ENCODE measurements at regions of chr7 and their contacts with region 1.

Region 1: GRCh38 chr7:151876899-151877777 is at the start of gene PRKAG2:
- DNase-seq: peak; percentile 53 to 84 (median 70)
- ATAC-seq: peak; percentile 54
- H3K4me3 ChIP-seq: peak within 1 kb of the TSS; percentile 91
- H3K4me3 Mint-ChIP-seq: peak within 1 kb of the TSS; percentile 99
- H3K27ac ChIP-seq: peak within 1 kb of the TSS; percentile 45 to 64
- H3K27ac Mint-ChIP-seq: peak within 1 kb of the TSS; percentile 93
- H3K4me1 ChIP-seq: peaks cover 24% of the 10 kb centered on the region
- H3K4me1 Mint-ChIP-seq: peaks cover 30% of the 10 kb centered on the region
- H3K27me3 ChIP-seq: no peaks in the 10 kb centered on the region
- H3K27me3 Mint-ChIP-seq: no peaks in the 10 kb centered on the region
- CTCF ChIP-seq: peak; percentile 21
- total RNA-seq, gene PRKAG2: 39.3 to 42.3 TPM

Region 2: DNA sequence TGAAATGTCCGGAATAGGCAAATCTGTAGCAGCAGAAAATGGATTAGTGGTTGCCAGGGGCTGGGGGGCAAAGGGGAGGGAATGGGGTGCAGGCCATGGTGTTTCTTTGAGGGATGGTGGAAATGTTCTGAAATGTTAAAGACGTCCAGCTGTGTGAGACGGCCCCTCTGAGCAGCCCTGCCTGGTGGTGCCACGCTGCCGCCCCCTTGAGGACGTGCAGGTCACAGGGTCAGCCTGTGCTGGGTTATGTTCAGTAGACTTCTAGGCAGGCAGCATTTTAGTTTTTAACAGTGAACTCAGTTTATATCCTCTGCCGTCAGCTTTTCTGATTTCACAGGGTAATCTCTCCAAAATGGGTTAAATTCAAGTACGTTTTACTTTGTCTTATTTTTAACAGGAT is 526.1 kb before region 1 on chr7:
- CTCF ChIA-PET with region 1: no interaction called
- POLR2A ChIA-PET with region 1: no interaction called
- intact Hi-C with region 1: loop called in 1 of 2 experiments (anchors 10 kb)
- DNase-seq: peak in 7 of 14 experiments; percentile 12 to 62 (median 37)
- ATAC-seq: no peak
- H3K4me3 ChIP-seq: no peak overlapping the region
- H3K4me3 Mint-ChIP-seq: peak overlapping the region; percentile 70
- H3K27ac ChIP-seq: peak overlapping the region; percentile 60 to 93
- H3K27ac Mint-ChIP-seq: peak overlapping the region; percentile 94
- H3K4me1 ChIP-seq: peaks cover 51% of the 10 kb centered on the region
- H3K4me1 Mint-ChIP-seq: peaks cover 59% of the 10 kb centered on the region
- H3K27me3 ChIP-seq: no peaks in the 10 kb centered on the region
- H3K27me3 Mint-ChIP-seq: no peaks in the 10 kb centered on the region
- CTCF ChIP-seq: no peak

Region 3: DNA sequence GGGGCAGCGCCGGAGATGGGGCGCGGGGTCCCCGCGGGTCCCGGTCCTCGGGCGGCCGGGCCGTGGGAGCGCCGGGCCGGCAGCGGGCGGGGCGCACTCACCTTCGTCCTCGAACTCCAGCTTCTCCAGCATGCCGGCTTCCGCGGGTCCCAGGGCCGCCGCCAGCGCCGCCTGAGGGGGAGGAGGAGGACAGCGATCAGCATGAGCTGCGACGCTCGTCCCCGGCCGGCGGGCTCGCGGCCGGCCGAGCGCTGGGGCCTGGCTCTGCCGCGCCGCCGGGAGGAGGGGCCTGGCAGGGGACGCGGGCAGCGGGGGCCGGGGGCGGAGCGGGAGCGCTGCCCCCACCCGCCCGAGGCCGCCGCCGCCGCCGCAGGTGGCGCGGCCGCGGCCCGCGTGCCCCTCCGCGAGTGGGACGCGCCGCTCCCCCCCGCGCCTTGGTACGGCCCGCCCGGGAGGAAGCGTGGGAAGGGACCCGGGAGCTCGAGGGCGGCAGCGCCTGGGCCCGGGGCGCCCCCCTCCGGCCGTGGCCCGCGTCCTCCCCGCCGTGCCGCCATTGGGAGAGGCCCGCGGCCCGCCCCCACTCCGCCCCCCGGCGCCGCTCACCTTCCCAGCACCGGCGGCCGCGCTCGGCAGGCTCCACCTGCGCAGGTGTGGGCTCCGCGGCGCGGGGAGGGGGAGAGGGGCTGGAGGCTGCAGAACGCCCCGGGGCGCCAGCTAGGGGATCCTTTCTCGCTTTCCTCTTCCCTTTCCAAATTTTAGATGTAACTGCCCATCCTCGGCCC is 245.0 kb before region 1 on chr7:
- CTCF ChIA-PET with region 1: interaction called, 5 read pairs
- POLR2A ChIA-PET with region 1: interaction called, 19 read pairs
- intact Hi-C with region 1: loop called in 1 of 2 experiments (anchors 2 kb)
- DNase-seq: peak; percentile 76 to 96 (median 89)
- ATAC-seq: peak; percentile 83
- H3K4me3 ChIP-seq: peak overlapping the region; percentile 68
- H3K4me3 Mint-ChIP-seq: peak overlapping the region; percentile 95
- H3K27ac ChIP-seq: peak overlapping the region; percentile 75 to 82
- H3K27ac Mint-ChIP-seq: peak overlapping the region; percentile 99
- H3K4me1 ChIP-seq: peaks cover 15% of the 10 kb centered on the region
- H3K4me1 Mint-ChIP-seq: peaks cover 45% of the 10 kb centered on the region
- H3K27me3 ChIP-seq: no peaks in the 10 kb centered on the region
- H3K27me3 Mint-ChIP-seq: no peaks in the 10 kb centered on the region
- CTCF ChIP-seq: no peak

Region 4: DNA sequence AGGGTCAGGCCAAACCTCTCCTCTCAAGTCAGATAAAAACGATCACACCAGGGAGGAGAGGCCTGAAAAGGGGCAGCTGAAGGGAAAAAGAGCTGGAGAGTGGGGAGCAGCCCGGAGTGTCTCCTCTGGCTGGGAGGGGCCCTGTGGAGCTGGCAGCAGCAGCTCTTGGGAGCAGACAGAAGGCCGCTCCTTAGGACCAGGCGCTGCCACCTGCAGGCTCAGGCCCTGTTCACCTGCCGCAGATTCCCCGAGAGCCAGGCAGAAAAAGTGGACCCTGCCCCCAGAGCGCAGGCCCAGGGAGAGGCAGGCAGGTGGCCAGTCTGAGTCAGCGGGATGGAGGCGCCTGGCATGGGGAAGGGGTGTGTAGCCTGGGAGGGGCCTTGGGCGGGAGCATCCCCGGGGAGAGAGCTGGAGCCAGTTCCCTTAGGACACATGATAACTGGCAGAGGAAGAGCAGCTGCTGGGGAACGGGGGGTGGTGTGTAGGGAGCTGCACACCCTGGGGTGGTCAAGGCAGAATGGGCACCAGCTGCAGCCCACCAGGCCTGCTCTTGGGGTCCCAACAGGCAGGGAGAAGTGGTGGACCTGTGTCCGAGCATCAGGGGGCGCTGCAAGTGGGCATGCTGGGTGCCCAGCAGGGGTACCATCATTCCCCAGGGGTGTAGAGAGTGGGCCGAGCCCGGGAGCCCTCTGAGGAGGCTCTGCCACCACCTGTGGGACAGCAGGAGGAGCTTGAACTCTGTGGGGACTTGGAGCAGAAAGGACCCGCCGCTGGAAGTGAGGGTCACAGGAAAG is 180.2 kb before region 1 on chr7:
- CTCF ChIA-PET with region 1: no interaction called
- POLR2A ChIA-PET with region 1: no interaction called
- intact Hi-C with region 1: no loop called
- DNase-seq: no peak
- ATAC-seq: no peak
- H3K4me3 ChIP-seq: no peak overlapping the region
- H3K4me3 Mint-ChIP-seq: no peak overlapping the region
- H3K27ac ChIP-seq: no peak overlapping the region
- H3K27ac Mint-ChIP-seq: no peak overlapping the region
- H3K4me1 ChIP-seq: no peaks in the 10 kb centered on the region
- H3K4me1 Mint-ChIP-seq: peaks cover 5% of the 10 kb centered on the region
- H3K27me3 ChIP-seq: no peaks in the 10 kb centered on the region
- H3K27me3 Mint-ChIP-seq: no peaks in the 10 kb centered on the region
- CTCF ChIP-seq: no peak

Region 5: GRCh38 chr7:151838861-151839391 is 38.2 kb before region 1 on chr7:
- CTCF ChIA-PET with region 1: no interaction called
- POLR2A ChIA-PET with region 1: interaction called, 13 read pairs
- intact Hi-C with region 1: no loop called
- DNase-seq: peak in 9 of 14 experiments; percentile 16 to 73 (median 34)
- ATAC-seq: peak; percentile 73
- H3K4me3 ChIP-seq: peak overlapping the region; percentile 37
- H3K4me3 Mint-ChIP-seq: peak overlapping the region; percentile 65
- H3K27ac ChIP-seq: peak overlapping the region; percentile 0 to 41
- H3K27ac Mint-ChIP-seq: peak overlapping the region; percentile 74
- H3K4me1 ChIP-seq: peaks cover 44% of the 10 kb centered on the region
- H3K4me1 Mint-ChIP-seq: peaks cover 31% of the 10 kb centered on the region
- H3K27me3 ChIP-seq: no peaks in the 10 kb centered on the region
- H3K27me3 Mint-ChIP-seq: no peaks in the 10 kb centered on the region
- CTCF ChIP-seq: no peak

Region 6: GRCh38 chr7:152025077-152025936 is 148.2 kb after region 1 on chr7 and contains the start of gene GALNT11:
- CTCF ChIA-PET with region 1: no interaction called
- POLR2A ChIA-PET with region 1: no interaction called
- intact Hi-C with region 1: loop called in 1 of 2 experiments (anchors 2 kb)
- DNase-seq: peak; percentile 72 to 96 (median 82)
- ATAC-seq: peak; percentile 92
- H3K4me3 ChIP-seq: peak within 1 kb of the TSS; percentile 96
- H3K4me3 Mint-ChIP-seq: peak within 1 kb of the TSS; percentile 96
- H3K27ac ChIP-seq: peak within 1 kb of the TSS in 1 of 2 donors; percentile 82
- H3K27ac Mint-ChIP-seq: peak within 1 kb of the TSS; percentile 96
- H3K4me1 ChIP-seq: peaks cover 30% of the 10 kb centered on the region
- H3K4me1 Mint-ChIP-seq: peaks cover 42% of the 10 kb centered on the region
- H3K27me3 ChIP-seq: no peaks in the 10 kb centered on the region
- H3K27me3 Mint-ChIP-seq: no peaks in the 10 kb centered on the region
- CTCF ChIP-seq: no peak
- total RNA-seq, gene GALNT11: 20.7 to 22.2 TPM

Region 7: DNA sequence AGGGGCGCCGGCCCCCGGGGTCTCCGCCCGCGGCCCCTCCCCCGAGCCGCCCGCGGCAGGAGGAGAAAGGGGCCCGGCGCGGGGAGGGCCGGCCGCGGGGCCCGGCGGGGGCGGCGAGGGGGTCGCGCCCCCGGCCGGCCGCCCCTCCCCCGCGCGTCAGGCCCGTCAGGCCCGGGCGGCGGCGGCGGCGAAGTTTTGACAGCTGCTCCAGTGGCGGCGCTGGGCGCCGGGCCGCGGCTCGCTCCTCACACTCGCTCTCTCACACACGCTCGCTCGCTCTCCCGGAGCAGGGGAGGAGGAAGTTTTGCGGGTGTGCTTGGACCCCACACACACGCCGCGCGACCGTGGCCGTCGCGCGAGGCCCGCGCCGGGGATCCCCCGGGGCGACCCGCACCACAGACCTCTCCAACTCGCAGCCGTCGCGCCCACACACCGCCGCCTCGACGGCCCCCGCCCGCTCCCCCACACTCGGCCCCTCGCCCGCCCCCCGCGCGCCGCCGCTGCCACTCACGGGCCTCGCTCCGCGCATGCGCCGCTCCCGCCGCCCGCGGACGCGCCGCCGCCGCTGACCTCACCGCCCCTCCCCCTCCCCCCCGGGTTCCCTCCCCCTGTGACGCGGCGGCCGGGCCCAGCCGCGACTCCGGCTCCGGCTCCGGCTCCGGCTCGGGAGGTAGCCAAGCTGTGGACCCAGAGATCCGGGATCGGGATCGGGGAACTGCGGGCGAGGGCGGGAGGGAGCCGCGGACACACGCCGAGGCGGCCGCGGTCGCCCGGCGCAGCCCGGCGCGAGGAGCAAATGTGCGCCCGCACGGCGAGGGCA is 559.2 kb after region 1 on chr7:
- CTCF ChIA-PET with region 1: no interaction called
- POLR2A ChIA-PET with region 1: no interaction called
- intact Hi-C with region 1: loop called in 1 of 2 experiments (anchors 5 kb)
- DNase-seq: peak; percentile 82 to 97 (median 88)
- ATAC-seq: peak; percentile 66
- H3K4me3 ChIP-seq: peak overlapping the region; percentile 62
- H3K4me3 Mint-ChIP-seq: peak overlapping the region; percentile 91
- H3K27ac ChIP-seq: peak overlapping the region; percentile 86 to 92
- H3K27ac Mint-ChIP-seq: peak overlapping the region; percentile 93
- H3K4me1 ChIP-seq: peaks cover 5% of the 10 kb centered on the region
- H3K4me1 Mint-ChIP-seq: peaks cover 29% of the 10 kb centered on the region
- H3K27me3 ChIP-seq: no peaks in the 10 kb centered on the region
- H3K27me3 Mint-ChIP-seq: no peaks in the 10 kb centered on the region
- CTCF ChIP-seq: no peak

Region 8: GRCh38 chr7:152675759-152676636 is 798.9 kb after region 1 on chr7 and contains the start of gene XRCC2:
- CTCF ChIA-PET with region 1: no interaction called
- POLR2A ChIA-PET with region 1: no interaction called
- intact Hi-C with region 1: loop called in 1 of 2 experiments (anchors 10 kb)
- DNase-seq: peak; percentile 87 to 98 (median 95)
- ATAC-seq: peak; percentile 94
- H3K4me3 ChIP-seq: peak within 1 kb of the TSS; percentile 73
- H3K4me3 Mint-ChIP-seq: peak within 1 kb of the TSS; percentile 92
- H3K27ac ChIP-seq: peak within 1 kb of the TSS; percentile 13 to 83
- H3K27ac Mint-ChIP-seq: peak within 1 kb of the TSS; percentile 73
- H3K4me1 ChIP-seq: peaks cover 14% of the 10 kb centered on the region
- H3K4me1 Mint-ChIP-seq: peaks cover 10% of the 10 kb centered on the region
- H3K27me3 ChIP-seq: no peaks in the 10 kb centered on the region
- H3K27me3 Mint-ChIP-seq: no peaks in the 10 kb centered on the region
- CTCF ChIP-seq: no peak
- total RNA-seq, gene XRCC2: 0.25 to 0.41 TPM

Measured in CD4-positive, alpha-beta T cell (primary cell).